Aorta (tissue), 5 donors: ENCODE measurements at regions of chr5 and their contacts with region 1.

Region 1: DNA sequence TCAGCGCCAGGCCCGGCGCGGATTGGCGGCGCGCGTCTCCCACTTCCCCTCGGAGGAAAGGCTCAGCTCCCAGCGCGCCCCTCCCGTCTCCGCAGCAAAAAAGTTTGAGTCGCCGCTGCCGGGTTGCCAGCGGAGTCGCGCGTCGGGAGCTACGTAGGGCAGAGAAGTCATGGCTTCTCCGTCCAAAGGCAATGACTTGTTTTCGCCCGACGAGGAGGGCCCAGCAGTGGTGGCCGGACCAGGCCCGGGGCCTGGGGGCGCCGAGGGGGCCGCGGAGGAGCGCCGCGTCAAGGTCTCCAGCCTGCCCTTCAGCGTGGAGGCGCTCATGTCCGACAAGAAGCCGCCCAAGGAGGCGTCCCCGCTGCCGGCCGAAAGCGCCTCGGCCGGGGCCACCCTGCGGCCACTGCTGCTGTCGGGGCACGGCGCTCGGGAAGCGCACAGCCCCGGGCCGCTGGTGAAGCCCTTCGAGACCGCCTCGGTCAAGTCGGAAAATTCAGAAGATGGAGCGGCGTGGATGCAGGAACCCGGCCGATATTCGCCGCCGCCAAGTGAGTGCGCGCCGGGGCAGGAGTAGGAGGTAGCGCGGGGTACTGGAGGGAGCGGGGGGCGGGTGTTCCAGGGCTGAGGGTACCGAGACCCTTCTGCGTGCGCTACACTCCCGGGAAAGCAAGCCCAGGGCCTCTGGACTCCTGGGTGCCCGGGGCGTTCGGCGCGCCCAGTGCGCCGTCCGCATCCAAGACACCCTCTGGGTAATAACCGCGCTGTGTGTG is at the start of gene MSX2:
- DNase-seq: peak; percentile 91 to 96
- ATAC-seq: peak; percentile 95
- H3K4me3 ChIP-seq: peak within 1 kb of the TSS; percentile 21 to 61
- H3K27ac ChIP-seq: no peak within 1 kb of the TSS
- H3K4me1 ChIP-seq: no peaks in the 10 kb centered on the region
- H3K27me3 ChIP-seq: peaks cover 0 to 3% of the 10 kb centered on the region in 2 donors
- total RNA-seq, gene MSX2: 1.3 to 2.9 TPM

Region 2: DNA sequence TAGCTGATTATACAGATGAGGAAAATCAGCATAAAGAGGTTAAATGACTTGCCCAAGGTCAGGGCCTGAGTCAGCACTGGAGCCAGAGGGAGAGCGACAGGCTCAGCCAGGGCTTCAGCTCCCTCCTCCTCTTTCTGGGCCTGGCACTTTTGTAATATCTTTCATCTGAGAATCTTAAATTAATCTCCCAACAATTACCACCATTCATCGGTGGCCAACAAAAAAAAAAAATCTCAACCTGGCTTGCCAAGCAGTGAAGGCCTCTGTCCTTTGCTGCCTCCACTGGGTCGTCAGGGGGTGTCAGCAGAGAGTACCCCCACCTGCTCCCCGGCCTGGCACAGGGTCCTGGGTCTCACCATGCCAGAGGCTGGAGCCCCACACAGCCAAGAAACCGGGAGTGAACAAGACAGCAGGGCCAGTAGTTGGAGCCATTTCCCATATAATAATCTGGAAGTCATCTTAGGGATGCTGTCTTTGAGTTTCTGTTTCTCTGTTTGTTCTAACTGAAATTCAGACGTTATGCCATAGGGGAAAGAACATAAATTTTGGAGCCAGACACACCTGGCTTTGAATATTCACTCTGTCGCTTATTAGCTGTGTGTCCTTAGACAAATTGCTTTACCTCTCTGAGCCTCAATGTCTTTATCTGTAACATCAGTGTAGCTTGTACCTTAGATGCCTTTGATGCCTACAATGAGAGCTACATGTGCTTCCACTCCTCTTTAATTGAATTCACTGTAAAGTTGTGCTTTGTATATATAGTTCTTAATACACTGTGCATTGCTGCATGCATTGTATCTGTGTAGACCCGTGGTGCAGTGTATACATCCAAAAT is 300.2 kb before region 1 on chr5:
- intact Hi-C with region 1: loop called (anchors 5 kb)
- DNase-seq: no peak
- ATAC-seq: no peak
- H3K4me3 ChIP-seq: no peak overlapping the region
- H3K27ac ChIP-seq: no peak overlapping the region
- H3K4me1 ChIP-seq: no peaks in the 10 kb centered on the region
- H3K27me3 ChIP-seq: no peaks in the 10 kb centered on the region

Region 3: GRCh38 chr5:174505621-174506020 is 219.1 kb before region 1 on chr5:
- intact Hi-C with region 1: no loop called
- DNase-seq: no peak
- ATAC-seq: no peak
- H3K4me3 ChIP-seq: no peak overlapping the region
- H3K27ac ChIP-seq: no peak overlapping the region
- H3K4me1 ChIP-seq: no peaks in the 10 kb centered on the region
- H3K27me3 ChIP-seq: no peaks in the 10 kb centered on the region

Region 4: DNA sequence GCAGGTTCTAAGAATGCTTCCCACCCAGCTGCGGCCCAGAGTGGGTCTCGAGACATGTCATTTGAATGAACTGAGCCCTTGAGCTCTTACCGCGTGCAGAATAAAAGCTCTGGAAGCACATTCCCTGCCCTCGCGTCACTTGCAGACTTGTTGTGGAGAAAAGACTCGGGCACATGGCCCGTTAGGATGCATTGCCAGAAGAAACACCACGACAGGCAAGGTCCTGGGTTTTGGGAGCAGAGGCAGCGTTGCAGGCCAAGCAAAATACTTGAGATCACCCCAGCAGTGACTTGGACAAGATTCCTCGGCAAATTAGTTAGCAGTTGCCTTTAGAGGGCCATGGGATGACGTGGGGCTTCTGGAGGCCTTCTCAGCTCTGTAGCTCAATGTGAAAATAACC is 171.1 kb before region 1 on chr5:
- intact Hi-C with region 1: loop called in 1 of 2 experiments (anchors 10 kb)
- DNase-seq: peak; percentile 94
- ATAC-seq: peak; percentile 92
- H3K4me3 ChIP-seq: no peak overlapping the region
- H3K27ac ChIP-seq: peak overlapping the region in 1 of 2 donors; percentile 56
- H3K4me1 ChIP-seq: peaks cover 1 to 13% of the 10 kb centered on the region in 2 donors
- H3K27me3 ChIP-seq: no peaks in the 10 kb centered on the region

Region 5: GRCh38 chr5:174799121-174799520 is 74.4 kb after region 1 on chr5:
- intact Hi-C with region 1: no loop called
- DNase-seq: no peak
- ATAC-seq: no peak
- H3K4me3 ChIP-seq: no peak overlapping the region
- H3K27ac ChIP-seq: no peak overlapping the region
- H3K4me1 ChIP-seq: no peaks in the 10 kb centered on the region
- H3K27me3 ChIP-seq: no peaks in the 10 kb centered on the region

Region 6: GRCh38 chr5:174910245-174910737 is 185.6 kb after region 1 on chr5:
- intact Hi-C with region 1: no loop called
- DNase-seq: peak; percentile 68 to 87
- ATAC-seq: peak; percentile 84
- H3K4me3 ChIP-seq: no peak overlapping the region
- H3K27ac ChIP-seq: no peak overlapping the region
- H3K4me1 ChIP-seq: no peaks in the 10 kb centered on the region
- H3K27me3 ChIP-seq: no peaks in the 10 kb centered on the region